ENCODE measurements at regions of chr2 and their contacts with region 1.

Region 1: GRCh38 chr2:127884436-127885345 is 1.1 kb downstream of the AMMECR1L start:
- DNase-seq: no peak
- H3K4me3 ChIP-seq: peak overlapping the region; percentile 28 to 33
- H3K4me3 Mint-ChIP-seq: peak overlapping the region; percentile 87 to 95 (median 92)
- H3K27ac ChIP-seq: peak overlapping the region; percentile 46
- H3K27ac Mint-ChIP-seq: peak overlapping the region; percentile 86 to 95 (median 90)
- H3K4me1 ChIP-seq: peaks cover 24% of the 10 kb centered on the region
- H3K4me1 Mint-ChIP-seq: peaks cover 36 to 65% (median 50%) of the 10 kb centered on the region in 4 donors
- H3K27me3 ChIP-seq: no peaks in the 10 kb centered on the region
- H3K27me3 Mint-ChIP-seq: no peaks in the 10 kb centered on the region

Region 2: GRCh38 chr2:127810619-127811396 is 73.9 kb before region 1 on chr2 and contains the start of gene WDR33:
- CTCF ChIA-PET with region 1: no interaction called
- POLR2A ChIA-PET with region 1: interaction called, 3 read pairs
- intact Hi-C with region 1: loop called (anchors 2 kb)
- DNase-seq: peak; percentile 92 to 95 (median 93)
- H3K4me3 ChIP-seq: peak within 1 kb of the TSS; percentile 68 to 98
- H3K4me3 Mint-ChIP-seq: peak within 1 kb of the TSS; percentile 93 to 99 (median 98)
- H3K27ac ChIP-seq: peak within 1 kb of the TSS; percentile 96
- H3K27ac Mint-ChIP-seq: peak within 1 kb of the TSS; percentile 98 to 100 (median 99)
- H3K4me1 ChIP-seq: peaks cover 47% of the 10 kb centered on the region
- H3K4me1 Mint-ChIP-seq: peaks cover 34 to 59% (median 48%) of the 10 kb centered on the region in 4 donors
- H3K27me3 ChIP-seq: no peaks in the 10 kb centered on the region
- H3K27me3 Mint-ChIP-seq: peaks cover 0 to 4% of the 10 kb centered on the region in 2 donors
- total RNA-seq, gene WDR33: 84.9 to 86.2 TPM

Region 3: DNA sequence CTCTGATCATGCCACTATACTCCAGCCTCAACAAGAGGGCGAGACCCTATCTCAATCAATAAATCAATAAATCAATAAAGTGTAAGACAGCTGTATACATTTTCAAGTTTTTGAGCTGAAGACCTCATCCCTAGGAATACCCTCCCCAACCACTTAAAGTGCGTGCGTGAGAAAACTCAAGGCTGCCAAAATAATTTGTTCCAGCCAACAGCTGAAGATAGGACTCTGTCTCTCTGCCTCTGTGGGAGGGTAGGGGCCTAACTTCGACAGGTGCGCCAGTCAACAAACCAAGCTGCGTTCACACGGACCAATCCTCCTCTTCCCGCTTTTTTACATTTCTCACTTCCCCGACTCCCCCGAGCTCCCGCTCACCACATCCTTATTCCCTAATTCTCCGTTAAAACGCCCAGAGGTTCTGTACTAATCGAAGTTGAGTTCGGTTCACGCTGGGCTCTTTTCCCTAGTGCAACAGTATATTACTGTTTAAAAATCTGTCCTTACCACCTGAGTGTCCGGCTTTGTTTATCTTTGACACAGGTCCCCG is 27.4 kb before region 1 on chr2:
- CTCF ChIA-PET with region 1: interaction called, 6 read pairs
- POLR2A ChIA-PET with region 1: interaction called, 9 read pairs
- intact Hi-C with region 1: loop called (anchors 2 kb)
- DNase-seq: peak in 1 of 5 donors; percentile 11
- H3K4me3 ChIP-seq: peak overlapping the region; percentile 70 to 78
- H3K4me3 Mint-ChIP-seq: peak overlapping the region; percentile 89 to 98 (median 93)
- H3K27ac ChIP-seq: peak overlapping the region; percentile 80
- H3K27ac Mint-ChIP-seq: peak overlapping the region; percentile 73 to 96 (median 93)
- H3K4me1 ChIP-seq: peaks cover 53% of the 10 kb centered on the region
- H3K4me1 Mint-ChIP-seq: peaks cover 26 to 62% (median 41%) of the 10 kb centered on the region in 4 donors
- H3K27me3 ChIP-seq: no peaks in the 10 kb centered on the region
- H3K27me3 Mint-ChIP-seq: no peaks in the 10 kb centered on the region

Region 4: DNA sequence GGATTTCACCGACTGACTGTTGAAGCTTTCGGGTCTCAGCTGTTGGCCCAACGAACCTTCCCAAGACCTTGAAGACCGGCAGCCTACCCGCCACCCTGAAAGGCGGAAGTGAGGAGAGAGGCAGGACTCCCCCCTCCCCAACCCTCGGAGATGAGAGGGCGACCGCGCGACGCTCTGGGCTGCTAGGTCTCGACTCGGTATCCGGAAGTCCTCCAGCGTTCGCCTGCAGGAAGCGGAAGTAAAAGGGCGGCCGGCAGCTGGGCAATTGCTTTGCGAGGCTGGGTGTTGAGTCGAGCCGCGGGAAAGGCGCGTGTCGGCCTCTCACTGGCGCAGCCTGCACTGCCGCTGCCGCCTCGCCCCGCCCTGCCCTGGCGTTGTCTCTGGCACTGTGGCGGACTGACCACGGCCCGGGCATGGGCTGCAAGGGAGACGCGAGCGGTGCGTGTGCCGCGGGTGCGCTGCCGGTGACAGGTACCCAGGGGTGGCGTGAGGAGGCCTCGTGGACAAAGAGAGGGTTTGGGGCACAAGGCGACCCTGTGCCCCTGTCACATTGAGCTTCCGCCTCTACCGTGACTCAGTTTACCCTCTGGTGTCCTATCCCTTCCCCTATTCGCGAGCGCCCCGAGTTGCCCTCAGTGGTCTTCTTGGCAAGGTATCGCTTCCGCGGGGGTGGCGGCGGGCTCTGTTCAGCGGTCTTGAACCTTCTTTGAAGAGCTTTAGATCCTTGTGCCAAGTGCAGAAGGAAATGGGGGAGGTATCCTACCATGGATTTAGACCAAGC is 206.4 kb after region 1 on chr2 and contains the start of gene UGGT1:
- CTCF ChIA-PET with region 1: no interaction called
- POLR2A ChIA-PET with region 1: interaction called, 7 read pairs
- intact Hi-C with region 1: loop called (anchors 5 kb)
- DNase-seq: peak; percentile 91 to 95 (median 93)
- H3K4me3 ChIP-seq: peak within 1 kb of the TSS; percentile 86 to 98
- H3K4me3 Mint-ChIP-seq: peak within 1 kb of the TSS; percentile 88 to 98 (median 93)
- H3K27ac ChIP-seq: peak within 1 kb of the TSS; percentile 81
- H3K27ac Mint-ChIP-seq: peak within 1 kb of the TSS; percentile 90 to 98 (median 96)
- H3K4me1 ChIP-seq: peaks cover 33% of the 10 kb centered on the region
- H3K4me1 Mint-ChIP-seq: peaks cover 27 to 61% (median 40%) of the 10 kb centered on the region in 4 donors
- H3K27me3 ChIP-seq: no peaks in the 10 kb centered on the region
- H3K27me3 Mint-ChIP-seq: no peaks in the 10 kb centered on the region
- total RNA-seq, gene UGGT1: 56.8 to 60.2 TPM

Region 5: DNA sequence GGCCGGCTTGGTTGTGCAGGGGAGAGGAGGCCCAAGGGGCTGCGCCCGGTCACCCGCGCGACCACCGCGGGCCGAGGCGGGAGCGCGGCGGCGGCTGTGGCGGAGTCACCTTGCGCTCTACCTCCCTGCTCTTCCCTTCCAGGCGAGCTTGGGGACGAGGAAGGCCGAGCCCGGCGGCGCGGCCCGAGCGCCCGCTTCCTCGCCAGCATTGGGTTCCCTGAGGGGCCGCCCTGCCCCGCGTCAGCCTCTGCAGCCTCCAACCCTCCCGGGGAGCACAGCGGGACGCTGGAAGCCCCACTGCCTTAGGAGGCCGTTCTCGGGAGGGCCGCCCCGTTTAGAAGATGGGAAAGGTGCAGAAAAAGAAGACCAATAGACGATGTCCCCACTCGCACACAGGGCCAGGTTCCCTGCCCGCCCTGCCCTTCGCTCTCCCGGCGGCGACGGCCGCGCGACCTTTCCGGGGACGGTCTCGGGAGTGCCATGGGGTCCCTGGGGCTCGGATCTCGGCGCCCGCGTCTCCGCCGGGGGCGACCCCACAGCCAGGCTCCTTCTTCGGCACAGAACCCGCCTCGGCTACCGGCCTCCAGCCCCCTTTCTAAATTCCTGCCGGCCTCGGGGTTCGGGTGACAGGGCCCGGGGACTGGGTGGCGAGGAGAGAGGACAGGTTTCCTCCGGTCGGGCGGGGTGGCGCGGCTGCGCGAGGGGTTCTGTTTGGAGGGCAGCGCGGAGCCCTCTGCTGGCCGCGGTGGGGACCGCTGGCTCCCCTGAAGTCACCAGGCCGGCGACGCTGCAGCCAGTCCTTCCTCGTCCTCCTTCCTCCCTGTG is 348.5 kb after region 1 on chr2:
- CTCF ChIA-PET with region 1: interaction called, 6 read pairs
- POLR2A ChIA-PET with region 1: no interaction called
- intact Hi-C with region 1: loop called (anchors 5 kb)
- DNase-seq: peak; percentile 72 to 77 (median 76)
- H3K4me3 ChIP-seq: peak overlapping the region; percentile 11 to 70
- H3K4me3 Mint-ChIP-seq: peak overlapping the region; percentile 85 to 93 (median 88)
- H3K27ac ChIP-seq: no peak overlapping the region
- H3K27ac Mint-ChIP-seq: peak overlapping the region in 4 of 7 donors; percentile 36 to 78 (median 62)
- H3K4me1 ChIP-seq: peaks cover 5% of the 10 kb centered on the region
- H3K4me1 Mint-ChIP-seq: peaks cover 1 to 7% (median 4%) of the 10 kb centered on the region in 4 donors
- H3K27me3 ChIP-seq: no peaks in the 10 kb centered on the region
- H3K27me3 Mint-ChIP-seq: peaks cover 2 to 8% of the 10 kb centered on the region in 2 donors

Measured in CD4-positive, alpha-beta memory T cell (primary cell).